ENCODE measurements at regions of chrX and their contacts with region 1.

Region 1: DNA sequence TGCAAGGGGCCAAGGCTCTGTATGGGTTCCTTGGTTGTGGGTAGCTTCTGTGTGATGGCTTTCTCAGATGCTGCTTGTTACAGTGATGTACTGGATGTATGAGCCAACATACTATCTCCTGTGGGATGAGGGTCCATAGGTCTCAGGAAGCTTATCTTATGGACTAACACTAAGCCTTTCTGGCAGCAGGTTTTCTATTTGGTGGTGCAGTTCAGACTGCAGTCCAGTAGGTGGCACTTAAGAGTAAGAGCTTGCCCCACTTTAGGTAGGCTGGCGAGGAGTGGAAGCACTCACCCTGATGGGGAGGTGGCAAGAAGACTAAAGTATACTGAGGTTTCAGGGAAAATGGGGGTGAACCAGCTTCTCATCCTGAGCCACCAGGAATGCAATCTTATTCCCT is 306.7 kb upstream of the MAOA start:
- H3K4me3 ChIP-seq: no peak overlapping the region
- H3K27ac ChIP-seq: no peak overlapping the region
- H3K4me1 ChIP-seq: no peaks in the 10 kb centered on the region
- CTCF ChIP-seq: no peak

Region 2: GRCh38 chrX:43557792-43558191 is 208.4 kb after region 1 on chrX:
- CTCF ChIA-PET with region 1: interaction called, 18 read pairs
- POLR2A ChIA-PET with region 1: no interaction called
- H3K4me3 ChIP-seq: no peak overlapping the region
- H3K27ac ChIP-seq: no peak overlapping the region
- H3K4me1 ChIP-seq: no peaks in the 10 kb centered on the region
- CTCF ChIP-seq: no peak